ENCODE measurements at regions of chr17 and their contacts with region 1.

Region 1: DNA sequence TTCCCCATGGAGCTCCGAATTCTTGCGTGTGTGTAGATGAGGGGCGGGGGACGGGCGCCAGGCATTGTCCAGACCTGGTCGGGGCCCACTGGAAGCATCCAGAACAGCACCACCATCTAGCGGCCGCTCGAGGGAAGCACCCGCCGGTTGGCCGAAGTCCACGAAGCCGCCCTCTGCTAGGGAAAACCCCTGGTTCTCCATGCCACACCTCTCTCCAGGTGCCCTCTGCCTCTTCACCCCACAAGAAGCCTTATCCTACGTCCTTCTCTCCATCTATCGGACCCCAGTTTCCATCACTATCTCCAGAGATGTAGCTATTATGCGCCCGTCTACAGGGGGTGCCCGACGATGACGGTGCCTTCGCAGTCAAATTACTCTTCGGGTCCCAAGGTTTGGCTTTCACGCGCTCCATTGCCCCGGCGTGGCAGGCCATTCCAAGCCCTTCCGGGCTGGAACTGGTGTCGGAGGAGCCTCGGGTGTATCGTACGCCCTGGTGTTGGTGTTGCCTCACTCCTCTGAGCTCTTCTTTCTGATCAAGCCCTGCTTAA is 617 bp upstream of the SENP3 start:
- DNase-seq: peak; percentile 89
- ATAC-seq: peak; percentile 64
- H3K4me3 ChIP-seq: peak overlapping the region; percentile 53 to 95 (median 81)
- H3K4me3 Mint-ChIP-seq: peak overlapping the region; percentile 97
- H3K27ac ChIP-seq: peak overlapping the region; percentile 97
- H3K27ac Mint-ChIP-seq: peak overlapping the region; percentile 98
- H3K4me1 ChIP-seq: peaks cover 41 to 61% of the 10 kb centered on the region in 2 donors
- H3K4me1 Mint-ChIP-seq: peaks cover 53% of the 10 kb centered on the region
- H3K27me3 ChIP-seq: no peaks in the 10 kb centered on the region
- H3K27me3 Mint-ChIP-seq: no peaks in the 10 kb centered on the region
- CTCF ChIP-seq: peak; percentile 80

Region 2: DNA sequence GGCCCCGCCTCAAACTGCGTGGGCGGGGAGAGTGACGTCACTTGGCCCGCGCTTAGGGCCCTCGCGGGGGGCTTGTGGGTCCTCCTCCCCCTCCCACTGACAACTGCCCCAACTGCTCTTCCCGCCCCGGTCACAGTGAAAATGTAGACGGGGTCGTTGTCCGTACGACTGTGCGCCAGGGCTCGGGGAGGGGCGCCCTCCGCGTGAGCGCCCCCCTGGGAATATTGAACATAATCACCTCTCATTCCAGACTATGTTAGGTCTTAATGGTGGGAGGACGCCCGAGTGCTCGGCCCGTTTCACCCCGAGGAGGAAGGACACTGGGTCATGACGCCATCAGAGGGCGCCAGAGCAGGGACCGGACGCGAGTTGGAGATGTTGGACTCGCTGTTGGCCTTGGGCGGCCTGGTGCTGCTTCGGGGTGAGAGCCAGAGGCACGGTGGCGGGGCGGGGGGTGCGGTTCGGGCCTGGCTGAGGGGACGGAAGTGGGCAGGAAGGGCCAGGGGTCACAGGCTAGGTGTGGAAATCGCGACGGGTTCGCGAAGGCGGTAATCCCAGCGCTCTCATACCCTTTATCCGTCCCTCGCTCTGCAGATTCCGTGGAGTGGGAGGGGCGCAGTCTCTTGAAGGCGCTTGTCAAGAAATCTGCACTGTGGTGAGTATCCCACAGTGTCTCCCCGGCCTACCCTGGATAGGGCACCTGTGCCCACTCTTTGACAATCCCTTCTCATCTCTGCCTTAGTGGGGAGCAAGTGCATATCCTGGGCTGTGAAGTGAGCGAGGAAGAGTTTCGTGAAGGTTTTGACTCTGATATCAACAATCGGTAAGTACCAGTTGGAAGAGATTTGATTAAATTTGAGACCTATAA is 308.7 kb before region 1 on chr17 and contains the start of gene ELP5:
- CTCF ChIA-PET with region 1: no interaction called
- POLR2A ChIA-PET with region 1: no interaction called
- intact Hi-C with region 1: loop called (anchors 1 kb)
- DNase-seq: peak; percentile 100
- ATAC-seq: peak; percentile 64
- H3K4me3 ChIP-seq: peak within 1 kb of the TSS; percentile 69 to 90 (median 78)
- H3K4me3 Mint-ChIP-seq: peak within 1 kb of the TSS; percentile 98
- H3K27ac ChIP-seq: peak within 1 kb of the TSS; percentile 98 to 100
- H3K27ac Mint-ChIP-seq: peak within 1 kb of the TSS; percentile 100
- H3K4me1 ChIP-seq: peaks cover 30 to 33% of the 10 kb centered on the region in 2 donors
- H3K4me1 Mint-ChIP-seq: peaks cover 44% of the 10 kb centered on the region
- H3K27me3 ChIP-seq: no peaks in the 10 kb centered on the region
- H3K27me3 Mint-ChIP-seq: no peaks in the 10 kb centered on the region
- CTCF ChIP-seq: no peak
- total RNA-seq, gene ELP5: 42.2 and 48.0 TPM in 2 replicates

Region 3: DNA sequence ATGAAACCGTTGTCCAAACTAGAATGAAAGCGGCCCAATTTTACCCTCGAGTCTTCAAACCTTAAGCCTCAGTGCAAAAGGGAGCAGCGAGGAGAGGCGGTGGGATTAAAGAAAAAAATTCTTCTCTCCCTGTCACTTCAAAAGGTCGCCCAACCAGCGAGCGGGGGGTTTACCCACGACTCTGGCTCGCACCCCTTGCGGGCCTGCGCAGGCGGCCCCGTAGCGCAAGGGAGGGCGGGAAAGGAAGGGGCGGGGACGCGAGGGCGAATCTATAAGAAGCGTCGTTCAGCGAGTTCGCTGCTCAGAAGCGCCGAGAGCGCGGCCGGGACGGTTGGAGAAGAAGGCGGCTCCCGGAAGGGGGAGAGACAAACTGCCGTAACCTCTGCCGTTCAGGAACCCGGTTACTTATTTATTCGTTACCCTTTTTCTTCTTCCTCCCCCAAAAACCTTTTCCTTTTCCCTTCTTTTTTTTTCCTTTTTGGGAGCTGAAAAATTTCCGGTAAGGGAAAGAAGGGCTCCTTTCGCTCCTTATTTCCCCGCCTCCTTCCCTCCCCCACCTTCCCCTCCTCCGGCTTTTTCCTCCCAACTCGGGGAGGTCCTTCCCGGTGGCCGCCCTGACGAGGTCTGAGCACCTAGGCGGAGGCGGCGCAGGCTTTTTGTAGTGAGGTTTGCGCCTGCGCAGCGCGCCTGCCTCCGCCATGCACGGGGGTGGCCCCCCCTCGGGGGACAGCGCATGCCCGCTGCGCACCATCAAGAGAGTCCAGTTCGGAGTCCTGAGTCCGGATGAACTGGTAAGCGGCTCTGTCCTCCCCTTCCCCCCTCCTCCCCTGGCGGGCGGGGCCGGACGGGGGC is 76.8 kb before region 1 on chr17 and contains the start of gene POLR2A:
- CTCF ChIA-PET with region 1: interaction called, 19 read pairs
- POLR2A ChIA-PET with region 1: interaction called, 13 read pairs
- intact Hi-C with region 1: loop called (anchors 1 kb)
- DNase-seq: peak; percentile 99
- ATAC-seq: peak; percentile 63
- H3K4me3 ChIP-seq: peak within 1 kb of the TSS; percentile 80 to 100 (median 97)
- H3K4me3 Mint-ChIP-seq: peak within 1 kb of the TSS; percentile 99
- H3K27ac ChIP-seq: peak within 1 kb of the TSS; percentile 100
- H3K27ac Mint-ChIP-seq: peak within 1 kb of the TSS; percentile 100
- H3K4me1 ChIP-seq: peaks cover 29 to 53% of the 10 kb centered on the region in 2 donors
- H3K4me1 Mint-ChIP-seq: peaks cover 71% of the 10 kb centered on the region
- H3K27me3 ChIP-seq: no peaks in the 10 kb centered on the region
- H3K27me3 Mint-ChIP-seq: no peaks in the 10 kb centered on the region
- CTCF ChIP-seq: no peak
- total RNA-seq, gene POLR2A: 225 and 240 TPM in 2 replicates

Region 4: DNA sequence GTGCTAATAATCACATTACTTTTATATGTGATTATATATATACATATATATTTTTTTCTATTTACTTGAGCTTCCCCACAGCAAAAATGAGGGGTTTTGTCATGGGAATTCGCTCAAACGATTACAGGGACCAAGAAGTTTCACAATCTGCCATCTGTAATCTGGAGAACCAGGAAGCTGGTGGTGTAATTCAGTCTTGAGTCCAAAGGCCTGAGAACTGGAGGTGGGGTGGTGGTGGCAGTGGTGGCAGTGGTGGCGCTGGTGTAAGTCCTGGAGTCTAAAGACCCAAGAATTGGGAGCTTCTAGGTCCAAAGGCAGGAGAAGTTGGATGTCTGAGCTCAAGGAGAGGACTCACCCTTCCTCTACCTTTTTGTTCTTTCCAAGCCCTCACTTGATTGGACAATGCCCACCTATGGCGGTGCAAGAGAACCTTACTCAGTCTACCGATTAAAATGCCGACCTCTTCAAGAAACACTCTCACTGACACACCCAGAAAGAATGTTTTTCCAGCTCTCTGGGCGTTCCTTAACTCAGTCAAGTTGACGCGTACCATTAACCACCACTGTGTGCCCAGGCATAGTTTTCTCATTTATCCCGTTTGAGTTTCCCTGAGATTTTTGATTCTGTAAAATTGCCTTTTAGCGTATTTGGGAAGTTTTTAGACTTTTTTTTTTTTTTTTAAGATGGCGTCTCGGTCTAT is 45.0 kb before region 1 on chr17:
- CTCF ChIA-PET with region 1: interaction called, 666 read pairs
- POLR2A ChIA-PET with region 1: interaction called, 32 read pairs
- intact Hi-C with region 1: loop called (anchors 1 kb)
- DNase-seq: no peak
- ATAC-seq: no peak
- H3K4me3 ChIP-seq: no peak overlapping the region
- H3K4me3 Mint-ChIP-seq: no peak overlapping the region
- H3K27ac ChIP-seq: no peak overlapping the region
- H3K27ac Mint-ChIP-seq: no peak overlapping the region
- H3K4me1 ChIP-seq: no peaks in the 10 kb centered on the region
- H3K4me1 Mint-ChIP-seq: no peaks in the 10 kb centered on the region
- H3K27me3 ChIP-seq: no peaks in the 10 kb centered on the region
- H3K27me3 Mint-ChIP-seq: no peaks in the 10 kb centered on the region
- CTCF ChIP-seq: no peak

Region 5: DNA sequence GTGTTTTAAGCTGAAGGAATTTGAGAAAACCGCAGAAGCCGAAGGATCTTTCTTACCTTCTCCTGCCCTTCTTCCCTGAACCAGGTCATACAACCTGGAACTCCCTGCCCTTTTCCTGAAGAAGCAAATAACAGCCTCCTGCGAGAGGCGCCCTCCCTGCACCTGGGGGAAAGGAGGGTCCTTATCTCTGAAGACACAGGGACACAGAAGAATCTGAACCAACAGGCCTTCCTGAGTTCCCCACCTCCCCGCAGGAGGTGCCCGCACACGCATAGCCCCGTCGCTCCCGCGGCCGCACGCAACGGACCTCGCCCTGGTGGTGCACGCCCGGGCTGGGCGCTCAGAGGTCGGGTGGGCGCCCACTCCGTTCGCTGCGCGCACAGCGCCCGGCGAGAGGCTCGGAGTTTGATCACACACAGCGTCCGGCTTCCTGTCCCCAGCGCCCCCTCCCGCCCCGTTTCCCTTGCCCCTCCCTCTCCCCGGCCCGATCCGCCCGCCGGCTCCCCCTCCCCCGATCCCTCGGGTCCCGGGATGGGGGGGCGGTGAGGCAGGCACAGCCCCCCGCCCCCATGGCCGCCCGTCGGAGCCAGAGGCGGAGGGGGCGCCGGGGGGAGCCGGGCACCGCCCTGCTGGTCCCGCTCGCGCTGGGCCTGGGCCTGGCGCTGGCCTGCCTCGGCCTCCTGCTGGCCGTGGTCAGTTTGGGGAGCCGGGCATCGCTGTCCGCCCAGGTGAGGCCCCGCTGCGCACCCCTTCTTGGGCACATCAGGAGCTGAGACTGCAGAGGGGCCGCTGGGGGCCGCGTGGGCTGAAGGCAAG is 12.3 kb before region 1 on chr17 and contains the start of gene TNFSF12:
- CTCF ChIA-PET with region 1: interaction called, 126 read pairs
- POLR2A ChIA-PET with region 1: interaction called, 4 read pairs
- intact Hi-C with region 1: loop called (anchors 1 kb)
- DNase-seq: peak; percentile 61
- ATAC-seq: peak; percentile 52
- H3K4me3 ChIP-seq: peak within 1 kb of the TSS; percentile 59 to 73 (median 72)
- H3K4me3 Mint-ChIP-seq: peak within 1 kb of the TSS; percentile 85
- H3K27ac ChIP-seq: peak within 1 kb of the TSS; percentile 54 to 92
- H3K27ac Mint-ChIP-seq: peak within 1 kb of the TSS; percentile 91
- H3K4me1 ChIP-seq: peaks cover 36 to 53% of the 10 kb centered on the region in 2 donors
- H3K4me1 Mint-ChIP-seq: peaks cover 42% of the 10 kb centered on the region
- H3K27me3 ChIP-seq: no peaks in the 10 kb centered on the region
- H3K27me3 Mint-ChIP-seq: no peaks in the 10 kb centered on the region
- CTCF ChIP-seq: no peak
- total RNA-seq, gene TNFSF12: 40.6 and 44.5 TPM in 2 replicates

Region 6: DNA sequence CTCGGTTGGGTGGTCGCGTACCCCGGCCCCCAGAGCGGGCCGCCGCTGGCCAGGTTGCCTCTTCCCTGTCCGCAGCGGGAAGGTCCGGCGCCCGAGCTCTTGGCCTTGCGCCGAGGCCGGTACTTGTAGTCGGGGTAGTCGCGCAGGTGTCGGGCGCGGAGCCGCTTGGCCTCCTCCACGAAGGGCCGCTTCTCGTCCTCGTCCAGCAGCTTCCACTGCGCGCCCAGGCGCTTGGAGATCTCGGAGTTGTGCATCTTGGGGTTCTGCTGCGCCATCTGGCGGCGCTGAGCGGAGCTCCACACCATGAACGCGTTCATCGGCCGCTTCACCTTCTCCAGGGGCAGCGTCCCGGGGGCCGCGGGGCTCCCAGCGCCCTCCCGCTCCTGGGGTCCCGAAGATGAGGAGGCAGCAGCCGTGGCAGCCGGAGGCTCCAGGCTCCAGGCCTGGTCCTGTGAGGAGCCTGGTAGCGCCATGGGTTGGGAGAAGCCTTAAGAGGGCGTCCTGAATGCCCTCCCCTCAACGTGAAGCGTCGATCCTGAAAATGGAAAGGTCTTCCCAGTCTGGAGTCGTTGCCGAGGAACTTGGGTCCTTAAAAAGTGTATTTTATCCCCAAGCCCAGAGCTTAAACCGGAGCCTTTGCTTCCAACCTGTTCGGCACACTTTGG is 28.2 kb after region 1 on chr17:
- CTCF ChIA-PET with region 1: interaction called, 50 read pairs
- POLR2A ChIA-PET with region 1: interaction called, 6 read pairs
- intact Hi-C with region 1: no loop called
- DNase-seq: peak; percentile 84
- ATAC-seq: peak; percentile 86
- H3K4me3 ChIP-seq: no peak overlapping the region
- H3K4me3 Mint-ChIP-seq: no peak overlapping the region
- H3K27ac ChIP-seq: no peak overlapping the region
- H3K27ac Mint-ChIP-seq: no peak overlapping the region
- H3K4me1 ChIP-seq: peaks cover 7 to 21% of the 10 kb centered on the region in 2 donors
- H3K4me1 Mint-ChIP-seq: peaks cover 10% of the 10 kb centered on the region
- H3K27me3 ChIP-seq: no peaks in the 10 kb centered on the region
- H3K27me3 Mint-ChIP-seq: no peaks in the 10 kb centered on the region
- CTCF ChIP-seq: peak; percentile 91